A673 (cell line): ENCODE measurements at regions of chrX and their contacts with region 1.

Region 1: DNA sequence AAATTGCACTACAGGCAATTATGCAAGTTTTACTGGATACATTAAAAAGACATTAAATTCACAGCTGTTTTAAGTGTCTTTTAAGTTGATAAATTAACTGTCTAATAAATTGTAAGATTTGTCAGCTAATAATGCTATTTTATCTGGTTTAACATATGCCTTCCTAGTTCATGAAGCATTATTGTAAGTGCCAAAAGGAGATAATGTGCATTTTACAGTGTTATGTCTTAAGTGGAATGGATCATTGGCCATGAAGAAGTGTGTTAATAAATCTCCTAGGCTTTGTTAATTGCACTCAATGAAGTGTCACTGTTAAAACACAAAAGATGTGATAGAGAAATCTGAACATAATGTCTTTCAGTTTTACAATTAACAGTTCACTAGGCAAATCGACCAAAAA is 784.3 kb upstream of the POU3F4 start:
- DNase-seq: no peak
- H3K4me3 ChIP-seq: no peak overlapping the region
- H3K27ac ChIP-seq: no peak overlapping the region
- H3K4me1 ChIP-seq: no peaks in the 10 kb centered on the region
- H3K27me3 ChIP-seq: no peaks in the 10 kb centered on the region
- CTCF ChIP-seq: no peak

Region 2: GRCh38 chrX:81355436-81355835 is 1368.4 kb before region 1 on chrX:
- CTCF ChIA-PET with region 1: no interaction called
- POLR2A ChIA-PET with region 1: no interaction called
- intact Hi-C with region 1: no loop called
- DNase-seq: no peak
- H3K4me3 ChIP-seq: no peak overlapping the region
- H3K27ac ChIP-seq: no peak overlapping the region
- H3K4me1 ChIP-seq: no peaks in the 10 kb centered on the region
- H3K27me3 ChIP-seq: no peaks in the 10 kb centered on the region
- CTCF ChIP-seq: no peak

Region 3: GRCh38 chrX:82757614-82758013 is 33.8 kb after region 1 on chrX:
- CTCF ChIA-PET with region 1: no interaction called
- POLR2A ChIA-PET with region 1: no interaction called
- intact Hi-C with region 1: loop called (anchors 5 kb)
- DNase-seq: no peak
- H3K4me3 ChIP-seq: no peak overlapping the region
- H3K27ac ChIP-seq: no peak overlapping the region
- H3K4me1 ChIP-seq: no peaks in the 10 kb centered on the region
- H3K27me3 ChIP-seq: no peaks in the 10 kb centered on the region
- CTCF ChIP-seq: no peak